Activated CD4-positive, alpha-beta T cell treated with anti-CD3 and anti-CD28 coated beads for 36 hours (primary cell): ENCODE measurements at regions of chr20 and their contacts with region 1.

Region 1: GRCh38 chr20:59207742-59208357 is 44.2 kb downstream of the ZNF831 start:
- DNase-seq: peak; percentile 91
- ATAC-seq: peak; percentile 97
- H3K4me3 Mint-ChIP-seq: no peak overlapping the region
- H3K27ac Mint-ChIP-seq: peak overlapping the region; percentile 74
- H3K4me1 Mint-ChIP-seq: peaks cover 32% of the 10 kb centered on the region
- H3K27me3 Mint-ChIP-seq: no peaks in the 10 kb centered on the region

Region 2: GRCh38 chr20:59082077-59082740 is 125.6 kb before region 1 on chr20:
- CTCF ChIA-PET with region 1: interaction called, 131 read pairs
- POLR2A ChIA-PET with region 1: interaction called, 3 read pairs
- intact Hi-C with region 1: no loop called
- DNase-seq: no peak
- ATAC-seq: no peak
- H3K4me3 Mint-ChIP-seq: no peak overlapping the region
- H3K27ac Mint-ChIP-seq: no peak overlapping the region
- H3K4me1 Mint-ChIP-seq: peaks cover 13% of the 10 kb centered on the region
- H3K27me3 Mint-ChIP-seq: peaks cover 7% of the 10 kb centered on the region

Region 3: GRCh38 chr20:59120491-59120890 is 87.4 kb before region 1 on chr20:
- CTCF ChIA-PET with region 1: interaction called, 10 read pairs
- POLR2A ChIA-PET with region 1: no interaction called
- intact Hi-C with region 1: loop called in 1 of 2 experiments (anchors 1 kb)
- DNase-seq: peak; percentile 43
- ATAC-seq: peak; percentile 10
- H3K4me3 Mint-ChIP-seq: peak overlapping the region; percentile 22
- H3K27ac Mint-ChIP-seq: peak overlapping the region; percentile 71
- H3K4me1 Mint-ChIP-seq: peaks cover 78% of the 10 kb centered on the region
- H3K27me3 Mint-ChIP-seq: no peaks in the 10 kb centered on the region

Region 4: GRCh38 chr20:59165891-59166709 is 41.8 kb before region 1 on chr20:
- CTCF ChIA-PET with region 1: interaction called, 5 read pairs
- POLR2A ChIA-PET with region 1: no interaction called
- intact Hi-C with region 1: loop called in 1 of 2 experiments (anchors 5 kb)
- DNase-seq: peak; percentile 62
- ATAC-seq: peak; percentile 69
- H3K4me3 Mint-ChIP-seq: peak overlapping the region; percentile 76
- H3K27ac Mint-ChIP-seq: peak overlapping the region; percentile 94
- H3K4me1 Mint-ChIP-seq: peaks cover 89% of the 10 kb centered on the region
- H3K27me3 Mint-ChIP-seq: no peaks in the 10 kb centered on the region

Region 5: DNA sequence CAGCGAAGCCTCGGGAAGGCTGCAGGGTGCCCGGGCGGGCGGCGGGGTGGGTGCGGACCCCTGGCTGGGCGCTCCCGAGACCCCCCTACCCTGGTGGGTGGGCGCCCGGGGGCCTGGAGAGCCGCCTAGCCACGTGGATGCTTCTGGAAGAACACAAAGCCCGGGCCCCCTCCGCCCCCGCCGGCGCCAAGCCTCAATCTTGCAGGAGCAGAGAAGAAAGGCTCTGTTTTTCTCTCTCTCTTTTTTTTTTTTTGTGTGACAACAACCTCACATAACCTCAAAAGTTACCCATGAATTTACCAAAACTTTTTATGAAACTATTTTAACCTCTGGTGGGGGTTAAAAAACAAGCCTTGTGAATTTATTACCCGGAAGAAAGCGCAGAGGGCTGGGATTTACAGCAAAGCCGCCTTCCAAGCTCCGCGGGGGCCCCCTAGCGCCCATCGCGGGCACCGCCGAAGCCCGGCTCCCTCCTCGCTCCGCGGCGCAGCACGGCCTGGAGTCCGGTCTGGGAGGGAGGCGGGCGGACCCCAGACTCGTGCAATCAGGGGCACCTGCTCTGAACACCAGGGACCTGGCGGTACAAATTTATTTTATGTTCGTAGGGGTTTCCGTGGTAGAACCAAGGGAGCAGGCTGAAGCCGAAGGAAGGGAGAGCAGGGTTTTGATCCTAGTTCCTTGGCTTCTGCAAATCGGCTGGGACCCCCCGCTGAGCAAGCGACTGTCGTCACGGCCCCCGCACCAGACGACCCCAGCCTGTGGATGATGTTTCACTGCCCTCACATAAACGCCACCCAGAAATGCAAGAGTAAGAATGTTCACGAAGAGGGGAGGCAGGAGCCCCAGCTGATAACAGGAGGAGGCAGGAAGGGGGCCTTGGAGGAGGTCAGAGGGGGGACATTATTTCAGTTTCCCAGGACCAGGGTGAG is 14.7 kb after region 1 on chr20:
- CTCF ChIA-PET with region 1: interaction called, 27 read pairs
- POLR2A ChIA-PET with region 1: no interaction called
- intact Hi-C with region 1: no loop called
- DNase-seq: peak; percentile 91
- ATAC-seq: peak; percentile 95
- H3K4me3 Mint-ChIP-seq: peak overlapping the region; percentile 65
- H3K27ac Mint-ChIP-seq: peak overlapping the region; percentile 81
- H3K4me1 Mint-ChIP-seq: peaks cover 31% of the 10 kb centered on the region
- H3K27me3 Mint-ChIP-seq: no peaks in the 10 kb centered on the region